ENCODE measurements at regions of chr1 and their contacts with region 1.

Region 1: DNA sequence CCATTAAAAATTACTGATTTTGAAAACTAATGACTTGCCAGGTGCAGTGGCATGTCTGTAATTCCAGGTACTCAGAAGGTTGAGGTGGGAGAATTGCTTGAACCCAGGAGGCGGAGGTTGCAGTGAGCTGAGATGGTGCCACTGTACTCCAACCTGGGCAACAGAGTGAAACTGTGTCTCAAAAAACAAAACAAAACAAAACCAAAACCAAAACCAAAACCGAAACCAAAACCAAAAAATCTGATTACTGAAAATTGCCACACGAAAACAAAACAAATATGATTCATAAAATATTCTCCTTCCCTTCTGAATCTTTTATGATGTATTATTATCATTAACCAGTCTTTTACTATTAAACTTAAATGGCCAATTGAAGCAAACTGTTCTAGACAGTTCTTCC is 74.1 kb downstream of the SERINC2 start:
- DNase-seq: no peak
- ATAC-seq: peak; percentile 42
- H3K4me3 Mint-ChIP-seq: no peak overlapping the region
- H3K27ac Mint-ChIP-seq: no peak overlapping the region
- H3K4me1 Mint-ChIP-seq: peaks cover 18% of the 10 kb centered on the region
- H3K27me3 Mint-ChIP-seq: no peaks in the 10 kb centered on the region

Region 2: GRCh38 chr1:31470794-31471340 is 16.3 kb before region 1 on chr1:
- CTCF ChIA-PET with region 1: no interaction called
- POLR2A ChIA-PET with region 1: no interaction called
- intact Hi-C with region 1: loop called in 1 of 2 experiments (anchors 1 kb)
- DNase-seq: no peak
- ATAC-seq: no peak
- H3K4me3 Mint-ChIP-seq: no peak overlapping the region
- H3K27ac Mint-ChIP-seq: no peak overlapping the region
- H3K4me1 Mint-ChIP-seq: no peaks in the 10 kb centered on the region
- H3K27me3 Mint-ChIP-seq: peaks cover 2% of the 10 kb centered on the region

Region 3: GRCh38 chr1:31866450-31867032 is 379.4 kb after region 1 on chr1:
- CTCF ChIA-PET with region 1: no interaction called
- POLR2A ChIA-PET with region 1: no interaction called
- intact Hi-C with region 1: no loop called
- DNase-seq: no peak
- ATAC-seq: peak; percentile 47
- H3K4me3 Mint-ChIP-seq: no peak overlapping the region
- H3K27ac Mint-ChIP-seq: no peak overlapping the region
- H3K4me1 Mint-ChIP-seq: peaks cover 11% of the 10 kb centered on the region
- H3K27me3 Mint-ChIP-seq: no peaks in the 10 kb centered on the region

Region 4: GRCh38 chr1:32082022-32082421 is 594.9 kb after region 1 on chr1:
- CTCF ChIA-PET with region 1: no interaction called
- POLR2A ChIA-PET with region 1: no interaction called
- intact Hi-C with region 1: no loop called
- DNase-seq: no peak
- ATAC-seq: no peak
- H3K4me3 Mint-ChIP-seq: no peak overlapping the region
- H3K27ac Mint-ChIP-seq: no peak overlapping the region
- H3K4me1 Mint-ChIP-seq: peaks cover 2% of the 10 kb centered on the region
- H3K27me3 Mint-ChIP-seq: no peaks in the 10 kb centered on the region

Measured in activated CD4-positive, alpha-beta T cell treated with anti-CD3 and anti-CD28 coated beads for 36 hours (primary cell).